Activated naive CD4-positive, alpha-beta T cell treated with anti-CD3 and anti-CD28 coated beads for 36 hours (primary cell): ENCODE measurements at regions of chr1 and their contacts with region 1.

Region 1: DNA sequence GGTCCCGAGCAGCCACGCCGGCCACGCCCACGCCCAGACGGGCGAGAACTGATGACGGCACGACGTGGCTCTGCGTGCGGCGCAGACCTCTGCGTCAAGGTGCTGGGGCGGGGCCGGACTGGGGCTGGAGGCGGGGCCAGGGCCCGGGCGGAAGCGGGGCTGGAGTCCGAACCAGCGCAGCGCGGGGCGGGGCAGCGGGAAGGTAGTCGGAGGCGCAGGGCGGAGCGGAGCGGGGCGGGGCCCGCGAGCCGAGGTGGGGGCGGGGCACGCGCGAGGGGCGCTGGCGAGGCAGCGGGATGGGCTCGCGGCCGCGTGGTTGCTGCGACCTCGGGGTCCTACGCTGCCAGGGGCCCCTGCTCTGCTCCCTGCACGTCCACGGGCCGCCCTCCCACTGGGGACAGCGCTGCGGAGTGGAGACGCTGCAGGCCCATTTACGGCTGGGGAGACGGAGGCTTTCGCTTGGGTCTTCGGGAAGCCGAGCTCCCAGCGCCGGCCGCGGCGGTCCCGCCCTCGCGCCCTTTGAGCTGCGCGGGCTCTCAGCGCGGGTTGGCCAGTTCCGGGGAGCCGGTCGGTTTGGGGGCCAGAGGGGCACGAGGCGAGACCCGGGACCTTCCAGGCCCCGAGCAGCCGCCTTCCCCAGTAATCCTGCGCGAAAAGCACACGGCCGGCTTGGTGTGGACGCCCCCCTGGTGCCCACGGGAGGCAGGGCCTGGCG is at the start of gene PEX10:
- DNase-seq: peak; percentile 99
- H3K4me3 Mint-ChIP-seq: peak within 1 kb of the TSS; percentile 84
- H3K27ac Mint-ChIP-seq: peak within 1 kb of the TSS; percentile 77
- H3K4me1 Mint-ChIP-seq: peaks cover 37% of the 10 kb centered on the region
- H3K27me3 Mint-ChIP-seq: no peaks in the 10 kb centered on the region
- total RNA-seq, gene PEX10: 8.6 to 9.1 TPM

Region 2: GRCh38 chr1:2384941-2385481 is 27.7 kb before region 1 on chr1:
- CTCF ChIA-PET with region 1: no interaction called
- intact Hi-C with region 1: no loop called
- DNase-seq: no peak
- H3K4me3 Mint-ChIP-seq: no peak overlapping the region
- H3K27ac Mint-ChIP-seq: no peak overlapping the region
- H3K4me1 Mint-ChIP-seq: peaks cover 4% of the 10 kb centered on the region
- H3K27me3 Mint-ChIP-seq: no peaks in the 10 kb centered on the region

Region 3: DNA sequence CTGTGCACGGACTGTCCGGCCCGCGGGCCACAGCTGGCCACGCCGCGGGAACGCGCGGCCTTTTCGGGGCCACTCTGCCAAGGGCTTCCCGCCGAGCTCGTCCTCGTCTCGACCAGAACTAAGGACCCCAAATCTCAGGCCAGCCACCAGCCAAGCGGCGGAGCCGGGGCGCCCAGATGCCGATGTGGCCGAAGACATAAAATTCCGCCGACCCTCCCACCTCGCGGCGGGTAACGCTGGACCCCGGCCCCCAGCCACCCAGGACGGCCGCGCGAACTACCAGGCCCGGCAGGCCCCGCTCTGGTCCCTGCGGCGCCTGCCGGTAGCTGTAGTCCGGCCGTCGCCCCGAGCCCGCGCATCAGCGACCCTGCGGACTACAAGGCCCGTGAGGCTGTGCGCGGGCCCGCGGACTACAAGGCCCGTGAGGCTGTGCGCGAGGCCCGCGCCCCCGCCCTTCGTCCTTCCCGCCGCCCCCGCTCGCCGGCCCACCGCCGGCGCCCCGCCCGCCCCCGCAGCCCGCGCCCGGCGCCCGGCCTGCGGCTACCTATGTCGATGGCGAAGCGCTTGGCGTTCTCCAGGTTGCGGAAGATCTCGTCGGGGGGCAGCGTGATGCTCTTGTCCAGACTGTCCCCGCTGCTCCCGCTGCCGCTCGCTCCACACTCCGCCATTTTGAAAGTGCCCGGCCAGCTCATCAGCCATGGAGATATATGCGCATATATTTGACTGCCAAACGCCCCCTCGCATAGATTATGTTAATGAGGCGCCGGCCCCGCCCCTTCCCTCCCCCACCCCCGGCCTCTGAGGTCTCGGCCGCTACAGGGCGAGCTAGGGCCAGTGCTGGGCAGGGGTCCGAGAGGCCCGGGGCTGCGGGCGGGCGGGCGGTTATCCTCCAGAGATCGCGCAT is 113.5 kb after region 1 on chr1 and contains the start of gene PANK4:
- CTCF ChIA-PET with region 1: interaction called, 6 read pairs
- intact Hi-C with region 1: loop called (anchors 1 kb)
- DNase-seq: peak; percentile 90
- H3K4me3 Mint-ChIP-seq: peak within 1 kb of the TSS; percentile 87
- H3K27ac Mint-ChIP-seq: peak within 1 kb of the TSS; percentile 97
- H3K4me1 Mint-ChIP-seq: peaks cover 47% of the 10 kb centered on the region
- H3K27me3 Mint-ChIP-seq: peaks cover 3% of the 10 kb centered on the region
- total RNA-seq, gene PANK4: 46.6 to 51.4 TPM

Region 4: DNA sequence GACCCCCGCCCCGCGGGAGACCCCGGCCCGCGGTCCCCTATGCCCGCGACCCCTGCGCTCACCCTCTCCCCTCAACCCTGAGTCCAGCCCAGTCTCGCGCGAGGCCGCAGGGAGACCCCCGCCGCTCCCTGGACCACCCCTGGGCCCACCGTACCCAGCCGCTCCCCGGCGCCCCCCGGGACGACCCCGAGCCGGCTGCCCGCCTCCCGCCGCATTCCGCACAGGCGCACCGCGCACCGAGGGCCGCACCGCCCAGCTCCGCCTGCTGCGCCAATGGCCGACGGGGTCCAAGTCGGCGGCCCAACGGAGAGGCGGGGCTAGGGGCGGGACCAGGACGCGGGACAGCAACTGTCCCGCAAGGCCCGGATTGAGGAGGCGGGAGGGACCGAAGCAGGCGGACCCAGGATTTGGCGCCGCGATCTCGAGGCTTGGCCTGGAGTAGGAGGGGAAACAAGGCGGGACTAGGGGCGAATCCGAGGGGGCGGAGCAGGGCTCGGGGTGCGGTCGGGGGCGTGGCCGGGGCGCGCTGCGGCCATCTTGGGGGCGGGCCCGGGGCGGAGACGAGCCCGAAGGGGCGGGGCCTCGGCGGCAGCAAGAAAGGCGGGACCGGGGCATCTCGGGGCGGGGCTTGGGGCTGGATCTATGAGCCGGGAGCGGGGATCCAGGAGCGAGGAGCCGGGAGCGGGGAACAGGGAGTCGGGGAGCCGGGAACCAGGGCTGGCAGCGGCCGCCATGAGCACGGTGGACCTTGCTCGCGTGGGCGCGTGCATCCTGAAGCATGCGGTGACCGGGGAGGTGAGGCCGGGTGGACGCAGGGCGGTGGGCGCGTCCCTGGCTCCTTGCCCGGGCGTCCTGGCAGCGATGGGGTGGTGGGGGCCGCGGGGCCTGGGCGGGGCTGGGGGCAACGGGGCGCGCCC is 173.7 kb after region 1 on chr1 and contains the start of gene PRXL2B:
- CTCF ChIA-PET with region 1: no interaction called
- intact Hi-C with region 1: loop called (anchors 1 kb)
- DNase-seq: peak; percentile 99
- H3K4me3 Mint-ChIP-seq: peak within 1 kb of the TSS; percentile 80
- H3K27ac Mint-ChIP-seq: peak within 1 kb of the TSS; percentile 91
- H3K4me1 Mint-ChIP-seq: peaks cover 46% of the 10 kb centered on the region
- H3K27me3 Mint-ChIP-seq: no peaks in the 10 kb centered on the region
- total RNA-seq, gene PRXL2B: 21.8 to 22.1 TPM

Region 5: DNA sequence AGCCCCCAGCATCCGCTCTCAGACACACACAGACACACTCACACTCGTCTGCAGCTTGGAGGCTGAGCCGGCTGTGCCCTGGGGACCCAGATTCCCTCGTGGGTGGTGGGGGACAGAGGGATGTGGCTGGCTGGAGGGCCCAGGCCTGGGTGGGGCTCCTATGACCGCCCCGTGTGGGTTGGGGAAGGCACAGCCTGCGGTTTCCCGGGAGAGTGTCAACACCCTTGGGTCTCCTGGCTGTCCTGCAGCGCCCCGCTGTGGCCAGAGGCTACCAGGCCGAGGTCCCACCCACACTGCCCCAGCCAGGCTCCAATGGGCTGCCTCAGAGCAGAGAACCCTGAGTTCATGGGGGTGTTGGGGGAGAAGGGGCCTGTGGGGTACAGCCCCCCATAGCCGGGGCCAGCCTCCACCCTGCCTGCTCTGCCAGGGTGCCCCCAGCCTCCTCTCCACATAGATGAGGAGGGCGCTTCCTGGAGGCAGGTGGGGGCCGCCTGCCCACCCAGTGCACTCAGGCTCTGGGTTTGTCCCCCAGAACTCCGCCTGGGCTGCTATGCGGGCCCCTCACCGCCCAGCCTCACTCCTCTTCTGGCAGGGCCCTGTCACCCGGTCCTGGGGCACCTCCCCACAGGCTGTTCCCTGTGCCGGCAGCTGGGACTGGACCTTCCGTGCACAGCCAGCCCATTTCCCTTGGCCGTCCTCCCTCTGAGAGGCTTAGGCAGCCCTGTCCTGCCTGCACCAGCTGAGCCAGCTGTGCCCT is 389.0 kb after region 1 on chr1 and contains the start of gene TTC34:
- CTCF ChIA-PET with region 1: no interaction called
- intact Hi-C with region 1: loop called (anchors 10 kb)
- DNase-seq: peak; percentile 68
- H3K4me3 Mint-ChIP-seq: no peak within 1 kb of the TSS
- H3K27ac Mint-ChIP-seq: no peak within 1 kb of the TSS
- H3K4me1 Mint-ChIP-seq: no peaks in the 10 kb centered on the region
- H3K27me3 Mint-ChIP-seq: peaks cover 7% of the 10 kb centered on the region
- total RNA-seq, gene TTC34: 0.91 to 1.1 TPM